WTC11 (cell line): ENCODE measurements at regions of chr14 and their contacts with region 1.

Region 1: DNA sequence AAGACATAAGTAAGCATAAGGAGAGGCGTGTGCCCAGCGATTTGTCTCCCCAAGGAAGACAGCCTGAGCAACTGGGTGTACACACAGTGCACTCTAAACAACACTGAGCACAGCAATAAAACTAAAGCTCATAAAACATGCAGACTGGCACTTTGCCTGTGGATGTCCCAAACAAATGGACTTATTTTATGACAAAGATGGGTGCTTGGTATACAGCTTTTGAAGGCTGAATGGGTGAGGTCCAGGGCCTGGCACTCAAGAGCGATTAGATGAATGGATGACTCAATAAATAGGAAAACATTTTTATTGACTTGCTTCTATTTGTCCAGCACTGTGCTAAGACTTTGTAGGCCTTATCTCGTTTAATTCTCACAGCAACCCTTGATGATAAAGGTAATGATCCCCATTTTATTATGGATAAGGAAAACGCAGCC is 28.5 kb downstream of the LGMN start:
- DNase-seq: no peak
- ATAC-seq: no peak
- H3K4me3 Mint-ChIP-seq: no peak overlapping the region
- H3K27ac Mint-ChIP-seq: no peak overlapping the region
- H3K4me1 Mint-ChIP-seq: no peaks in the 10 kb centered on the region
- H3K27me3 Mint-ChIP-seq: no peaks in the 10 kb centered on the region
- CTCF ChIP-seq: no peak

Region 2: DNA sequence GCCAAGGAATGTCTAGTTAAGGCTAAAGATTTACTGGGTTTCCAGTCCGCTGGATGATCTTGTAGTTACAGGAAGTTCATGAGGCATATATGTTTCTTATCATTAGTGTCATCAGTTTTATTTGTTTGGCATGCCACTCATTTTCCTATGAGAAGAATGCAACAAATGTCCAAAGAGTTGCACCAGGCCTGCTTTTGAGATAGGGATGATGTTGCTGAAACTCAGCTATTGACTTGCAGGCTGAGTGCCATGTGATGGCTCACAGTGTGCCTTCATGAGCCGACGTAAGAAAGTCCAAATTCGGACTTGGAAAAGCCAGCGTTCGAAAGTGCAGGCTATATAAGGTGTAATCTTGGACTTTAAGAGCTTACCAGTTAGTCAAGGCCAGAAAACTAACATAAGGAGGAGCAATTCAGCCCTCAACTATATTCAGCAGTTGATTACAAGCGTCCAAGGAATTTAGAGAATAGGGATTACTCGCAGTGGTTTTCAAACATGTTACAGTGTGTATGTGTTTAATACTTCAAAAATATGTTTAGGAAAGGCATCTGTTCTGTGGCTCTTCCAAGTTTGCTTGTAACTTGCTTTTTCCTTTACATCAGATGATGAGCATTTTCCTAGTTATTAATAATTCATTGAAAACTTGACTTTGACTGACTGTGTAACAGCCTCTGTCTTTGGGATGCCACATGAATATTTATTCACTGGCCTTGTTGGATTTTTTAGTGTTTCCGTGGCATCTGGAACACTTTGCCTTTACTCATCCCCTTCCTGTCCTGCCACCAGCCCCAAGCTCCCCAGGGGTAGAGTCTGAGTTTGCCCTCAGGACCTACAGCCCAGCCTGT is 72.7 kb before region 1 on chr14:
- CTCF ChIA-PET with region 1: no interaction called
- POLR2A ChIA-PET with region 1: no interaction called
- DNase-seq: no peak
- ATAC-seq: no peak
- H3K4me3 Mint-ChIP-seq: no peak overlapping the region
- H3K27ac Mint-ChIP-seq: no peak overlapping the region
- H3K4me1 Mint-ChIP-seq: no peaks in the 10 kb centered on the region
- H3K27me3 Mint-ChIP-seq: no peaks in the 10 kb centered on the region
- CTCF ChIP-seq: no peak

Region 3: DNA sequence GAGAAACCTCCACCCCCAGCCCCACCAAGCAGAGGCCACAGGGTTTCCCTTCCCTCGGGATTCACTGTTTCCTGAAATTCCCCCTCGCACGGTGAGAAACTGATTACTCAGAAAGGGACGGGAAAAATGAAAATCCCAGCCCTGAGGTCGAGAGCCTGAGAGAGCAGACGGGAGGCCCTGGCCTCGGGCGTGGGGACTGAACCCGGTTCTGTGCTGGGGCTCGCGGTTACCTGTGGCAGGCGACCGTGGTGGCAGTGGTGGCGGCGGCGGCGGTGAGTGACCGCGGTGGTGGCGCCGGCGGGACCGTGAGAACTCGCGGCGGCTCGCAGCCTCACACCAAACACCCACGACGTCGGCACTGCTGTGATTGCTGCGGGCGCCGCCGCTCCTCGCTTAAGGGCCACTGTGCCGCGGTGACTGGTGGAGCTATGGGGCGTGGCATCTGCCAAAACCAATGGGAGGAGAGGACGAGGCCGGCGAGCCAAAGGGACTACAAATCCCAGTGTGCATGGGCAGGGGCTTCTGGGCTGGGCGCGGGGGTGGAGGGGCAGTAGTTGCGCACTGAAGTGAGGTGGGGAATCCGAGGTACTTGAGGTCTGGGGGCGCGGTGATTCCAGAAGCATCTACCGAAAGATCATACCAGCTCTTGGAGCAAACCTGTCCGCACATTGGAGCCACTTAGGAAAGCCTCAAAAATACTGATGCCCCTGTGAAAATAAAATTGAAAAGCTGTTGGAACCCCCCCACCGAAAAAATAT is 28.5 kb after region 1 on chr14 and contains the start of gene LGMN:
- CTCF ChIA-PET with region 1: interaction called, 10 read pairs
- POLR2A ChIA-PET with region 1: no interaction called
- DNase-seq: peak; percentile 97
- ATAC-seq: peak; percentile 100
- H3K4me3 Mint-ChIP-seq: peak within 1 kb of the TSS; percentile 84
- H3K27ac Mint-ChIP-seq: peak within 1 kb of the TSS; percentile 50
- H3K4me1 Mint-ChIP-seq: peaks cover 19% of the 10 kb centered on the region
- H3K27me3 Mint-ChIP-seq: peaks cover 28% of the 10 kb centered on the region
- CTCF ChIP-seq: no peak
- total RNA-seq, gene LGMN: 55.7 to 68.0 TPM (median 66.1 TPM) in 3 replicates

Region 4: DNA sequence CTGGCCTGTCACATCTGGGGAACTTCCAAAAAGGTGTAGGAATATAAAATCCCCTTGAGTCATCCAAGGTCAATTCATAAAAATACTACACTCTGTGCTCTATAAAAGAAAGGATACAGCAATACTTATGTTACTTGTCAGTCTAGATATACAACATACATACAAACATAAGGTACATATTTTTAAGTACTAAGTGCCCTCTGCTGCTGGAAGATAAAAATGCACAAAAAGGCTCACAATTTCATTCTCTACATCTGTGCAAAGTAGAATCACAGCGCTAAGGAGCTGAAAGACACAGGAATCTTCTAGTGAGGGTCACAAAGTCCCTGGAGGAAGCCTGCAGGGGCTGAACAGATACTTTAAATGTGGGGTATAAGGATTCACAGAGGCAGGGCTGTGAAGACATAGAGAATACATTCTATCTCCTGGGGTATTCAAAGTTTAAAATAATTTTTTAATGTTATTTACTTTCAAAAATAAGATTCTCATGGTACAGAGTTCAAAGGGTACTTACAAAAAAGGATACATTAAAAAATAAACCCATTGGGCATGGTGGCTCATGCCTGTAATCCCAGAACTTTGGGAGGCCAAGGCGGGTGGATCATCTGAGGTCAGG is 64.0 kb after region 1 on chr14:
- CTCF ChIA-PET with region 1: interaction called, 21 read pairs
- POLR2A ChIA-PET with region 1: no interaction called
- DNase-seq: no peak
- ATAC-seq: peak; percentile 63
- H3K4me3 Mint-ChIP-seq: no peak overlapping the region
- H3K27ac Mint-ChIP-seq: no peak overlapping the region
- H3K4me1 Mint-ChIP-seq: peaks cover 10% of the 10 kb centered on the region
- H3K27me3 Mint-ChIP-seq: peaks cover 4% of the 10 kb centered on the region
- CTCF ChIP-seq: no peak